Posterior vena cava (tissue), 2 donors: ENCODE measurements at regions of chr19 and their contacts with region 1.

Region 1: GRCh38 chr19:38964738-38965137 is 10.8 kb downstream of the FBXO17 start:
- DNase-seq: no peak

Region 2: GRCh38 chr19:38980583-38981374 is 16.0 kb after region 1 on chr19:
- intact Hi-C with region 1: loop called in 1 of 2 experiments (anchors 1 kb)
- DNase-seq: no peak